ENCODE measurements at regions of chr19 and their contacts with region 1.

Region 1: DNA sequence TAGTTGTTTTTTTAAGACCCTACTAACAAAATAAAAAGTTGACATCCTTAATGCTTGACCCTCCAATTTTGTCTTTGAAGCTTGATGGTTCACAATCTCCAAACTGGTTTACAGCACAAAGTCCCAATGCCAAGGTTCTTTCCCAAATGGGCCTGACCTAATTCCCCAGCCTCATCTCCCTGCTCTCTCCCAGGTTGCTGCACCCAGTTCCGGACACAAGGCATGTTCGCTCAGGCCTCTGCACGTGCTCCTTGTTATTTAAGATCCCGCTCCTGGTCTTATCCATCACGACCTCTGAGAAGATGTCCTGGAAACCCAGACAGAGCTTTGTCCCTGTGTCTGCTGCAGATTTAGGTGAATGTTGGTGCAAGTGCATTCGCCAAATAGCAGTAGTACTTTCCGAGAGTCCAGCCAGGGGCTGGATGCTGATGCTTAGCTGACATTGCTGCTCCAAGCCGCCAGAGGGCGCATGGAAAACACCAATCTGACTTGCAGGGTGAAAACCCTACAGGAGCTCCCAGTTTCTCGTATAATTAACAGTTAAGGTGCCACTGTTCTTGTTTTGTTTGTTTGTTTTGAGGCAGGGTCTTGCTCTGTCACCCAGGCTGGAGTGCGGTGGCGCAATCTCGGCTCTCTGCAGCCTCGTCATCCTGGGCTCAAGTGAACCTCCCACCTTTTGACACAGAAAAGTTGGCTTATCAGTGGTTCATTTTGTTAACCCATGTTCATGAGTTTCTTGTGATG is 18.5 kb downstream of the LYPD3 start:
- DNase-seq: peak; percentile 54 to 85
- H3K4me3 ChIP-seq: no peak overlapping the region
- H3K27ac ChIP-seq: no peak overlapping the region
- H3K4me1 ChIP-seq: no peaks in the 10 kb centered on the region
- H3K27me3 ChIP-seq: no peaks in the 10 kb centered on the region
- CTCF ChIP-seq: peak; percentile 89 to 95 (median 94)
- EP300 ChIP-seq: no peak
- POLR2A ChIP-seq: no peak
- RAD21 ChIP-seq: peak; percentile 93 to 94

Region 2: GRCh38 chr19:43408043-43408442 is 38.9 kb before region 1 on chr19:
- CTCF ChIA-PET with region 1: no interaction called
- POLR2A ChIA-PET with region 1: no interaction called
- DNase-seq: no peak
- H3K4me3 ChIP-seq: no peak overlapping the region
- H3K27ac ChIP-seq: no peak overlapping the region
- H3K4me1 ChIP-seq: peaks cover 0 to 6% (median 3%) of the 10 kb centered on the region in 4 experiments; a peak in 5 of 7 replicates
- H3K27me3 ChIP-seq: 0 out of 7 replicates have a peak, but pooled peaks cover 0 to 4% (median 0%) of the 10 kb centered on the region in 4 experiments
- CTCF ChIP-seq: no peak
- EP300 ChIP-seq: no peak
- POLR2A ChIP-seq: no peak
- RAD21 ChIP-seq: no peak

Region 3: DNA sequence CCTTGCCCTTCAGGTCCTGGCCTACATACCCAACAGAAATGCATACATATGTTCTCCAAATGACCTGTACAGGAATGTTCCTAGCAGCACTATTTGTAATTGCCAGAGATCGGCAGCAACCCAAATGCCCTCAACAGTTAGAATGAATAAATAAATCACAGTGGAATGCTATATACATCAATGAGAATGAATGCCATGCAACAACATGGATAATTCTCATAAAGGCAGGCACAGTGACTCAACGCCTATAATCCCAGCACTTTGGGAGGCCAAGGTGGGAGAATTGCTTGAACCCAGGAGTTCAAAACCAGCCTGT is 13.6 kb before region 1 on chr19:
- CTCF ChIA-PET with region 1: interaction called, 44 read pairs
- POLR2A ChIA-PET with region 1: no interaction called
- DNase-seq: no peak
- H3K4me3 ChIP-seq: no peak overlapping the region
- H3K27ac ChIP-seq: no peak overlapping the region
- H3K4me1 ChIP-seq: no peaks in the 10 kb centered on the region
- H3K27me3 ChIP-seq: no peaks in the 10 kb centered on the region
- CTCF ChIP-seq: no peak
- EP300 ChIP-seq: no peak
- POLR2A ChIP-seq: no peak
- RAD21 ChIP-seq: no peak

Region 4: GRCh38 chr19:43463381-43464136 is 16.6 kb after region 1 on chr19:
- CTCF ChIA-PET with region 1: interaction called, 33 read pairs
- POLR2A ChIA-PET with region 1: interaction called, 4 read pairs
- DNase-seq: peak; percentile 74 to 99
- H3K4me3 ChIP-seq: peak overlapping the region; percentile 50 to 93 (median 85)
- H3K27ac ChIP-seq: no peak overlapping the region
- H3K4me1 ChIP-seq: peaks cover 0 to 8% (median 3%) of the 10 kb centered on the region in 4 experiments; a peak in 4 of 7 replicates
- H3K27me3 ChIP-seq: peaks cover 0 to 25% (median 15%) of the 10 kb centered on the region in 4 experiments; a peak in 6 of 7 replicates
- CTCF ChIP-seq: no peak
- EP300 ChIP-seq: no peak
- POLR2A ChIP-seq: no peak; a peak in 1 of 3 replicates
- RAD21 ChIP-seq: no peak

Region 5: DNA sequence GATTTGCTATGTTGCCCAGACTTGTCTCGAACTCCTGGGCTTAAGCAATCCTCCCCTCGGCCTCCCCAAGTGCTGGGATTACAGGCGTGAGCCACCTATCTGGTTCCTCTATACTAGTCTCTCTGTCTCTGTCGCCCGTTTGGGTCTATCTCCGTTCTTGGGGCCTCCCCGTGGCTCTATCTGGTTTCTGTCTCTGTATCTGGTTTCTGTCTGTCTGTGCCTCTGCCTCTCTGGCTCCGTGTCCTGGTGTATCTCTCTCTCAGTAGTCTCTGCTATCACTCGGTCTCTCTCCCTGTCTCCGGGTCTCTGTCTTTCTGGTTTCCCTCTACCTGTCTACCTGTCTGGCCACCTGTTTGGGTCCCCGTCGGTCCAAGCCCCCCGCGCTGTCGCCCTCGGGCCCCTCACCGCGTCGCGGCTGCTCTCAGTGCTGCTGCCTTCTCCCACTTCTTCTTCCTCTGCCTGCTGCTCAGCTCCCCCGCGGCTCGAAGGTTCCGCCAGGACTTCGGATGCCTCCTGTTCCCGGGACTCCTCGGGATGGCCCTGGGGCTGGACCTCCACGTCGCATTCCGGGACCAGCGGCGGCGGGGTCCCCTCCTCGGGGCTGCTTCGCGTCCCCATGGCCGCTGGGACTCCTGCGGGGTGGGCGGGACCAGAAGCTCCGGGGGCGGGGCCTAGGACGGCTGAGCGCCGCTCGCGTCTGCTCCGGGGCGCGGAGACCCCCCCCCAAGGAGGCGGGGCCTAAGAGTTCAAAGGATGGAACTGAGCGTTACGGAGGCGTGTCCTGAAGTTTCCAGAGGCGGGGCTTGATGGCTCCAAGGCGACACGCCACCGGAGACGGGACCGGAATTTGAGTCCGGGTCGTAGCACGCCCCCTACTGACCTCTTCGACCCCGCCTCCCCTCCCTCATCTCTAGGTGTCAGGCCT is 56.8 kb after region 1 on chr19:
- CTCF ChIA-PET with region 1: interaction called, 13 read pairs
- POLR2A ChIA-PET with region 1: interaction called, 3 read pairs
- DNase-seq: peak; percentile 87 to 99
- H3K4me3 ChIP-seq: peak overlapping the region; percentile 74 to 91 (median 76)
- H3K27ac ChIP-seq: no peak overlapping the region
- H3K4me1 ChIP-seq: peaks cover 0 to 6% (median 0%) of the 10 kb centered on the region in 4 experiments; a peak in 1 of 7 replicates
- H3K27me3 ChIP-seq: peaks cover 3 to 16% (median 14%) of the 10 kb centered on the region in 4 experiments
- CTCF ChIP-seq: peak; percentile 33 to 52 (median 51); a peak in 3 of 4 replicates
- EP300 ChIP-seq: no peak
- POLR2A ChIP-seq: no peak
- RAD21 ChIP-seq: peak; percentile 34 to 37; a peak in 3 of 4 replicates

Region 6: DNA sequence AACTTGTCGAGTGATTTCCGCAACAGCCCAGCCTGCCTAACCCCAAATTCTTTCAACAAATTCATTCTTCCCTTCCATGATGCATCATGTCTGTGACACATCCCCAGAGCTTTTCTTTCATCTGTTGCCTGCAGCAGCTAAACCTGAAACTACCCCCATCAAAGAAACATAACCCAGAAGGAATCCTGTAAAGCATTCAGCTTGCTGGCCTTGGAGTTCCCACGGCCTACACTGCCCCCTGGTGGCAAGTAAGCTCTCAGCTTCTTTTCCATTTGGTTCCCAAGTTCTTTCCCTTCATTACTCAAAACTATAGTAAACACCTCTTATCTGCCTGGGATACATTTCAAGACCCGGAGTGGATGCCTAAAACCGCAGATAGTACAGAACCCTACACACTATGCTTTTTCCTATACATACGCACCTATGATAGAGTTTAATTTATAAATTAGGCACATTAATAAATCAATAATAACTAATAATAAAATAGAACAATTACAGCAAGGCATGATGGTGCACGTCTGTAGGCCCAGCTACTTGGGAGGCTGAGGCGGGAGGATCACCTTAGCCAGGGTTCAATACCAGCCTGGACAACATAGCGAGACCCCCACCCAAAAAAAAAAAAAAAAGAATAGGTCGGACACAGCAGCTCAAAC is 72.6 kb after region 1 on chr19:
- CTCF ChIA-PET with region 1: interaction called, 192 read pairs
- POLR2A ChIA-PET with region 1: interaction called, 15 read pairs
- DNase-seq: peak; percentile 66 to 90
- H3K4me3 ChIP-seq: no peak overlapping the region
- H3K27ac ChIP-seq: no peak overlapping the region
- H3K4me1 ChIP-seq: no peaks in the 10 kb centered on the region
- H3K27me3 ChIP-seq: no peaks in the 10 kb centered on the region
- CTCF ChIP-seq: peak; percentile 74 to 91 (median 76)
- EP300 ChIP-seq: no peak
- POLR2A ChIP-seq: no peak
- RAD21 ChIP-seq: peak; percentile 94 to 97

Region 7: GRCh38 chr19:43555185-43555770 is 108.4 kb after region 1 on chr19:
- CTCF ChIA-PET with region 1: interaction called, 11 read pairs
- POLR2A ChIA-PET with region 1: no interaction called
- DNase-seq: peak; percentile 61 to 95
- H3K4me3 ChIP-seq: no peak overlapping the region
- H3K27ac ChIP-seq: no peak overlapping the region
- H3K4me1 ChIP-seq: 0 out of 7 replicates have a peak, but pooled peaks cover 0 to 2% (median 0%) of the 10 kb centered on the region in 4 experiments
- H3K27me3 ChIP-seq: no peaks in the 10 kb centered on the region
- CTCF ChIP-seq: peak; percentile 85 to 98 (median 93)
- EP300 ChIP-seq: no peak
- POLR2A ChIP-seq: no peak
- RAD21 ChIP-seq: peak; percentile 68 to 81